Naive thymus-derived CD4-positive, alpha-beta T cell (primary cell): ENCODE measurements at regions of chr19 and their contacts with region 1.

Region 1: DNA sequence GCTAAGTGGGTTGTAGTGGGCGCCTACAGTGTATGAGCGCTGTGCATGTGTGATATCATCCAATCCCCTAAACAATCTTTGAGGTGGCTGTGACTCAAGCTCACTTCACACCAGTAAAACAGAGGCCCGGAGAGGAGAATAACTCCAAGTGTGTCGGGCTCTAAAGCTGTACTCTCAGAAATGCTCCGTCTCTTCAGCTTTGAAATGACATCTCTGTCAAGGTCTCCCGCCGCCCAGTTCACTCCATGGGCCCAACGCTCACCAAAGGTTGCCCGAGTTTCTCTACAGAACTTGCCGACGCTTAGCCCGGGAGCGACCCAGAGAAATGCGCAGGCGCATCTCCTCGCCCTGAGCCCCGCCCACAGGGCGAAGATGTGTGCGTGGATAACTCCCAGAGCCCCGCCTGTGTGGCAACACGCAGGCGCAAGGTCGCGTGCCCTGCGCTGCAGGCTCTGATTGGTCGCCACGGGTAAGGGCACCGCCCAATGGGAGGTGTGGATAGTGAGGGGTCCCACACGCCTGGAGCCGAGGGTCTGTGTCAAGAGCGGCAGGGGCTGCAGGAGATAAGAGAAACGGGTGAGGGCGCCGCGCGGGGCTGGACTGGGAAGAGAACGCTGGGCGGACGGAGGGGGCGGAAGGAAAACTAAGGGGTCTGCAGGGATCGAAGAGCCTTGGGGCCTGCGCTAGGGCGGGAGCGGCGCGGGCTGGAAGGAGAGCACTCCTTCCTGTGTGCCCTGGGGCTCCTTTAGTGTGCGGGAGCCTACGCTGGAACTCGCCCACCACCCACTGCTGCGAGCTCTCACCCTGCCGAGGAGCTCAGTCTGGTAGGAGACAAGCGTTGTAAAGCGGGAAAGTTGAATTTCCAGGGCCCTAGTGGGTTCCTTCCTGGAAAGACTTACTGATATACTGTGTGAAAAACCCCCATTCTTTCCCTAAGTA is at the start of gene ZNF526:
- DNase-seq: peak; percentile 92 to 97 (median 96)
- ATAC-seq: peak; percentile 88
- H3K4me3 ChIP-seq: peak within 1 kb of the TSS; percentile 72
- H3K4me3 Mint-ChIP-seq: peak within 1 kb of the TSS; percentile 95 to 99 (median 98)
- H3K27ac ChIP-seq: peak within 1 kb of the TSS; percentile 88
- H3K27ac Mint-ChIP-seq: peak within 1 kb of the TSS; percentile 88 to 98 (median 95)
- H3K4me1 ChIP-seq: peaks cover 37 to 43% of the 10 kb centered on the region in 2 donors
- H3K4me1 Mint-ChIP-seq: peaks cover 46 to 62% (median 55%) of the 10 kb centered on the region in 7 donors
- H3K27me3 ChIP-seq: no peaks in the 10 kb centered on the region
- H3K27me3 Mint-ChIP-seq: peaks cover 0 to 3% (median 0%) of the 10 kb centered on the region in 5 donors
- total RNA-seq, gene ZNF526: 8.6 to 25.2 (median 22.7) TPM

Region 2: GRCh38 chr19:41897181-41897580 is 322.9 kb before region 1 on chr19:
- CTCF ChIA-PET with region 1: no interaction called
- POLR2A ChIA-PET with region 1: no interaction called
- intact Hi-C with region 1: no loop called
- DNase-seq: no peak
- ATAC-seq: no peak
- H3K4me3 ChIP-seq: no peak overlapping the region
- H3K4me3 Mint-ChIP-seq: peak overlapping the region in 1 of 10 donors; percentile 58
- H3K27ac ChIP-seq: peak overlapping the region; percentile 40
- H3K27ac Mint-ChIP-seq: peak overlapping the region in 4 of 9 donors; percentile 56 to 83 (median 75)
- H3K4me1 ChIP-seq: peaks cover 28 to 62% of the 10 kb centered on the region in 2 donors
- H3K4me1 Mint-ChIP-seq: peaks cover 30 to 78% (median 50%) of the 10 kb centered on the region in 7 donors
- H3K27me3 ChIP-seq: no peaks in the 10 kb centered on the region
- H3K27me3 Mint-ChIP-seq: no peaks in the 10 kb centered on the region

Region 3: DNA sequence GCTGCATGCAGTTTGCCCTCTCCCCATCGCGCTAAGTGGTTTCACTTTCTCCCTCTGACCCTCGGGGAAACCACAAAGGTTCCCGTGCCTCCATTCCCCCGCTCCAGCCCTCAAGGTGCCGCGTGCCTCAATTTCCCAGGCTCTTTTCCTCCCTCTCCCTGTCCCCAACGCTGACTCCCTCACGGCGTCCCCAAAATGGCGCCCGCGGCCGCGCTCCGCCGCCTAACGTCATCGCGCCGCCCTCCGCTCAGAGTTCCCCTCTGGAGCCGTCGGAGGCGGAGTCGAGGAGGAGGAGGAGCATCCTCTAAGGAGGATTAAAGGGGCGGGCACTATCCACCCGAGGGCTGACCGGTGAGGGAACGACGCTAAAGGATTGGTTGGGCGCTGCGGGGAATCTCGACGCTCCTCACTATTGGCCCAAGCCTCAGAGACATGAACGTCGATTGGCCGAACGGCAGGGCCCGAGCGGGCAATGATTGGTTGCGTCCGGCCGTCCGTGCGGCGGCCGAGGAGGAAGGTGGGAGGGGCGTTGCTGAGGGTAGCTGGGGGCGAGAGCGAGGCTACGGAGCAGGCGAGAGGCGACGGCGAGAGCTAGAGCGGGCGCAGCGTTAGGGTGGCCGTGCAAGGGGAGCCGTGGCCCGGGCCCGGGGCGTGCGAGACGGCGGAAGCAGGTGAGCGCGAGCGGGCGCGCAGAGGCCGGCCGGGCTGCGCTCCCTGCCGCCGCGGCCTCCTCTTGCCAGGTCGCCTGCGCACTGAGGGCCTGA is 144.3 kb before region 1 on chr19 and contains the start of gene ZNF574:
- CTCF ChIA-PET with region 1: no interaction called
- POLR2A ChIA-PET with region 1: no interaction called
- intact Hi-C with region 1: loop called in 1 of 2 experiments (anchors 1 kb)
- DNase-seq: peak; percentile 91 to 99 (median 98)
- ATAC-seq: peak; percentile 98
- H3K4me3 ChIP-seq: peak within 1 kb of the TSS; percentile 70
- H3K4me3 Mint-ChIP-seq: peak within 1 kb of the TSS; percentile 92 to 100 (median 98)
- H3K27ac ChIP-seq: peak within 1 kb of the TSS; percentile 97
- H3K27ac Mint-ChIP-seq: peak within 1 kb of the TSS; percentile 99 to 100 (median 100)
- H3K4me1 ChIP-seq: peaks cover 19 to 24% of the 10 kb centered on the region in 2 donors
- H3K4me1 Mint-ChIP-seq: peaks cover 26 to 44% (median 38%) of the 10 kb centered on the region in 7 donors
- H3K27me3 ChIP-seq: no peaks in the 10 kb centered on the region
- H3K27me3 Mint-ChIP-seq: peaks cover 0 to 13% (median 0%) of the 10 kb centered on the region in 5 donors
- total RNA-seq, gene ZNF574: 17.6 to 26.7 (median 20.9) TPM

Region 4: GRCh38 chr19:42158926-42159325 is 61.2 kb before region 1 on chr19:
- CTCF ChIA-PET with region 1: no interaction called
- POLR2A ChIA-PET with region 1: no interaction called
- intact Hi-C with region 1: no loop called
- DNase-seq: no peak
- ATAC-seq: no peak
- H3K4me3 ChIP-seq: no peak overlapping the region
- H3K4me3 Mint-ChIP-seq: no peak overlapping the region
- H3K27ac ChIP-seq: no peak overlapping the region
- H3K27ac Mint-ChIP-seq: peak overlapping the region in 1 of 9 donors; percentile 77
- H3K4me1 ChIP-seq: peaks cover 3 to 16% of the 10 kb centered on the region in 2 donors
- H3K4me1 Mint-ChIP-seq: peaks cover 13 to 25% (median 21%) of the 10 kb centered on the region in 7 donors
- H3K27me3 ChIP-seq: no peaks in the 10 kb centered on the region
- H3K27me3 Mint-ChIP-seq: peaks cover 0 to 27% (median 0%) of the 10 kb centered on the region in 5 donors

Region 5: GRCh38 chr19:42199440-42200115 is 20.5 kb before region 1 on chr19:
- CTCF ChIA-PET with region 1: interaction called, 8 read pairs
- POLR2A ChIA-PET with region 1: interaction called, 56 read pairs
- intact Hi-C with region 1: loop called (anchors 1 kb)
- DNase-seq: peak in 8 of 9 donors; percentile 40 to 69 (median 48)
- ATAC-seq: peak; percentile 49
- H3K4me3 ChIP-seq: peak overlapping the region; percentile 52
- H3K4me3 Mint-ChIP-seq: peak overlapping the region; percentile 78 to 97 (median 86)
- H3K27ac ChIP-seq: peak overlapping the region; percentile 82
- H3K27ac Mint-ChIP-seq: peak overlapping the region; percentile 84 to 96 (median 92)
- H3K4me1 ChIP-seq: peaks cover 71 to 75% of the 10 kb centered on the region in 2 donors
- H3K4me1 Mint-ChIP-seq: peaks cover 70 to 89% (median 80%) of the 10 kb centered on the region in 7 donors
- H3K27me3 ChIP-seq: no peaks in the 10 kb centered on the region
- H3K27me3 Mint-ChIP-seq: no peaks in the 10 kb centered on the region

Region 6: GRCh38 chr19:42268704-42269477 is 48.8 kb after region 1 on chr19 and contains the start of gene CIC:
- CTCF ChIA-PET with region 1: no interaction called
- POLR2A ChIA-PET with region 1: interaction called, 4 read pairs
- intact Hi-C with region 1: loop called (anchors 1 kb)
- DNase-seq: peak; percentile 95 to 100 (median 99)
- ATAC-seq: peak; percentile 82
- H3K4me3 ChIP-seq: peak within 1 kb of the TSS; percentile 85
- H3K4me3 Mint-ChIP-seq: peak within 1 kb of the TSS in 1 of 10 donors; percentile 94
- H3K27ac ChIP-seq: peak within 1 kb of the TSS; percentile 96
- H3K27ac Mint-ChIP-seq: peak within 1 kb of the TSS in 4 of 9 donors; percentile 98 to 99 (median 99)
- H3K4me1 ChIP-seq: peaks cover 23 to 29% of the 10 kb centered on the region in 2 donors
- H3K4me1 Mint-ChIP-seq: peaks cover 8 to 31% (median 25%) of the 10 kb centered on the region in 7 donors
- H3K27me3 ChIP-seq: no peaks in the 10 kb centered on the region
- H3K27me3 Mint-ChIP-seq: no peaks in the 10 kb centered on the region
- total RNA-seq, gene CIC: 90.4 to 134 (median 102) TPM

Region 7: DNA sequence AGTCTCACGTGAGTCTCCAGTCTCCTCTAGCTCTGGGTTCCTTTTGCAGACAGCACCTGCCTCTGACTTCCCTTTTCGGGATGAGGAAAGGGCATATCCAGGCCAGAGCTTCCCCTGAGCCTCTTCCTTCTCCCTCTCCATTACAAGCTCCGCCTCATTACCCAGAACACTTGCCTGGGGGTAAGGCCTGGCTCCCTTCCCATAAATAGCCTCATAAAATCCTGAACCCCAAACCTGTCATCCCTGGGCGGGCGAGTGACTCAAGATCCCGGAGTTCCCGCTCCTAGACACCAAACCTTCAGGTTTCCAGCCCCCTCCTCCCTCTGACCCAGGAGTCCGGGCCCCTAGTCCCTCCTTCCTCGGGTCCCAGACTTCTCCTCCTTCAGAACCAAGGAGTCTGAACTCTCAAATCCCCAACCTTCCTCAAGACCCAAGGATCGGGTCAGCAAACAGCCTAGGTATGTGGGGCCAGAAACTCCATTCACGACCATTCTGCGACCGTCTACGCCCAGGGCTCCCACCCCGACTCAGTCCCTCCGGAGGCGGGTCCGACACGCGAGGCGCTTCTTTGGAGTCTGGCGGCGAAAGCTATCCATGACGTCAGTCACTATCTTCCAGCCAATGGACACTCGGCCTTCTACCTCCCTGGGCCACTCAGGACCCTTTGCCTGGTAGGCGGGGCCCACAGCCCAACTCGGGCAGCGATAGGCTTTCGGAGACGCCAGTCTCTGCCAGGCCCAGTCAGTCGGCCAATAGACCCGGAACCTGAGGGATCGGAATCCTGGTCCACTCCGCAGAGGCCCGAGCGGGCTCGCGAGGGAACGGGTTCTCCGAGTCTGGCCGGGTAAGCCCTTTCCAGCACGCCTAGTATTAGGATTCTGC is 176.5 kb after region 1 on chr19:
- CTCF ChIA-PET with region 1: no interaction called
- POLR2A ChIA-PET with region 1: no interaction called
- intact Hi-C with region 1: loop called in 1 of 2 experiments (anchors 5 kb)
- DNase-seq: peak; percentile 80 to 97 (median 84)
- ATAC-seq: peak; percentile 96
- H3K4me3 ChIP-seq: peak overlapping the region; percentile 93
- H3K4me3 Mint-ChIP-seq: peak overlapping the region; percentile 85 to 99 (median 91)
- H3K27ac ChIP-seq: peak overlapping the region; percentile 70
- H3K27ac Mint-ChIP-seq: peak overlapping the region; percentile 85 to 93 (median 88)
- H3K4me1 ChIP-seq: peaks cover 13 to 16% of the 10 kb centered on the region in 2 donors
- H3K4me1 Mint-ChIP-seq: peaks cover 29 to 49% (median 44%) of the 10 kb centered on the region in 7 donors
- H3K27me3 ChIP-seq: no peaks in the 10 kb centered on the region
- H3K27me3 Mint-ChIP-seq: peaks cover 0 to 8% (median 6%) of the 10 kb centered on the region in 5 donors

Region 8: GRCh38 chr19:42487032-42487797 is 267.1 kb after region 1 on chr19:
- CTCF ChIA-PET with region 1: no interaction called
- POLR2A ChIA-PET with region 1: no interaction called
- intact Hi-C with region 1: no loop called
- DNase-seq: no peak
- ATAC-seq: no peak
- H3K4me3 ChIP-seq: no peak overlapping the region
- H3K4me3 Mint-ChIP-seq: no peak overlapping the region
- H3K27ac ChIP-seq: no peak overlapping the region
- H3K27ac Mint-ChIP-seq: peak overlapping the region in 1 of 9 donors; percentile 15
- H3K4me1 ChIP-seq: no peaks in the 10 kb centered on the region
- H3K4me1 Mint-ChIP-seq: peaks cover 0 to 23% (median 5%) of the 10 kb centered on the region in 7 donors
- H3K27me3 ChIP-seq: no peaks in the 10 kb centered on the region
- H3K27me3 Mint-ChIP-seq: no peaks in the 10 kb centered on the region